ENCODE measurements at regions of chr19 and their contacts with region 1.

Region 1: GRCh38 chr19:29528350-29528945 is 2.7 kb downstream of the VSTM2B start:
- DNase-seq: peak; percentile 89
- ATAC-seq: peak; percentile 84
- H3K4me3 Mint-ChIP-seq: peak overlapping the region; percentile 52
- H3K27ac Mint-ChIP-seq: no peak overlapping the region
- H3K4me1 Mint-ChIP-seq: peaks cover 22% of the 10 kb centered on the region
- H3K27me3 Mint-ChIP-seq: peaks cover 63% of the 10 kb centered on the region

Region 2: DNA sequence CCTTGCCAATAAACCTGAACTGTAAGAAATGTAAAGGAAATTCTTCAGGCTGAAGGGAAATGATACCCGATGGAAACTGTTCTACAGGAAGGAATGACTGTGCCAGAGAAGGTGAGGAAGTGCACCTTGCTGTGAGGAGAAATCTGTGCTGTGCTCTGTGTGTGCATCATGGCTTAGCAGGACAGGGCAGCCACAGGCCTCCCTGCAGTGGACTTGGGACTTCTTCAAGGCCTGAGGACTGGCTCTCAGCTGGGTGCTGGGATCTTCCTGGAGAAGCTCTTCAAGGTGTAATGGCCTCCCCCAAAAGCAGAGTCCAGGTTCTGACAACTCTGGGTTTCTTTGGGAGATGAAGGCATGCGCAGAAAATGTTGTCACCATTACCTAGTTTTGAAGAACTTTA is 460.6 kb before region 1 on chr19:
- CTCF ChIA-PET with region 1: no interaction called
- POLR2A ChIA-PET with region 1: no interaction called
- intact Hi-C with region 1: no loop called
- DNase-seq: no peak
- ATAC-seq: no peak
- H3K4me3 Mint-ChIP-seq: no peak overlapping the region
- H3K27ac Mint-ChIP-seq: no peak overlapping the region
- H3K4me1 Mint-ChIP-seq: no peaks in the 10 kb centered on the region
- H3K27me3 Mint-ChIP-seq: peaks cover 8% of the 10 kb centered on the region

Region 3: DNA sequence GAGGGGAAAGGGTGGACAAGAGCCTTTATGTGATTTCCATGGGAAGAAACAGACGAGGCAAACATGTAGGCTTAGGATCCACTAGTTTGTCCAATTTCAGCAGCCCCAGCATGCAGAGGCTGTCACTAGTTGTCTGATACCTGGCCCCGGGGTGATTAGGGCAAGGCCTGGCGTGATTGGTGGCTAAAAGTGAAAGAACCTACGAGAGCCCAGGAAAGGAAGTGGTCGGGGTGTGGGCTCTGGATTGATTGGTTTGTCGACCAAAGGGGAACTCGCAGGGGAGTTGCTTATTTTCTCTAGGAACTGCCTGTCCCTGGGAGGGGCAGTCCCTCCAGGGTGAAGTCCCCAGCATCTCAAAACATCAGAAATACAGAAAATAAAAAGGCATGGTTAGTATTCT is 251.3 kb before region 1 on chr19:
- CTCF ChIA-PET with region 1: no interaction called
- POLR2A ChIA-PET with region 1: no interaction called
- intact Hi-C with region 1: loop called in 1 of 2 experiments (anchors 5 kb)
- DNase-seq: peak; percentile 76
- ATAC-seq: peak; percentile 100
- H3K4me3 Mint-ChIP-seq: no peak overlapping the region
- H3K27ac Mint-ChIP-seq: peak overlapping the region; percentile 33
- H3K4me1 Mint-ChIP-seq: peaks cover 10% of the 10 kb centered on the region
- H3K27me3 Mint-ChIP-seq: peaks cover 18% of the 10 kb centered on the region

Region 4: GRCh38 chr19:29467824-29468401 is 60.5 kb before region 1 on chr19:
- CTCF ChIA-PET with region 1: interaction called, 4 read pairs
- POLR2A ChIA-PET with region 1: no interaction called
- intact Hi-C with region 1: loop called in 1 of 2 experiments (anchors 10 kb)
- DNase-seq: peak; percentile 55
- ATAC-seq: no peak
- H3K4me3 Mint-ChIP-seq: no peak overlapping the region
- H3K27ac Mint-ChIP-seq: no peak overlapping the region
- H3K4me1 Mint-ChIP-seq: no peaks in the 10 kb centered on the region
- H3K27me3 Mint-ChIP-seq: peaks cover 22% of the 10 kb centered on the region

Region 5: DNA sequence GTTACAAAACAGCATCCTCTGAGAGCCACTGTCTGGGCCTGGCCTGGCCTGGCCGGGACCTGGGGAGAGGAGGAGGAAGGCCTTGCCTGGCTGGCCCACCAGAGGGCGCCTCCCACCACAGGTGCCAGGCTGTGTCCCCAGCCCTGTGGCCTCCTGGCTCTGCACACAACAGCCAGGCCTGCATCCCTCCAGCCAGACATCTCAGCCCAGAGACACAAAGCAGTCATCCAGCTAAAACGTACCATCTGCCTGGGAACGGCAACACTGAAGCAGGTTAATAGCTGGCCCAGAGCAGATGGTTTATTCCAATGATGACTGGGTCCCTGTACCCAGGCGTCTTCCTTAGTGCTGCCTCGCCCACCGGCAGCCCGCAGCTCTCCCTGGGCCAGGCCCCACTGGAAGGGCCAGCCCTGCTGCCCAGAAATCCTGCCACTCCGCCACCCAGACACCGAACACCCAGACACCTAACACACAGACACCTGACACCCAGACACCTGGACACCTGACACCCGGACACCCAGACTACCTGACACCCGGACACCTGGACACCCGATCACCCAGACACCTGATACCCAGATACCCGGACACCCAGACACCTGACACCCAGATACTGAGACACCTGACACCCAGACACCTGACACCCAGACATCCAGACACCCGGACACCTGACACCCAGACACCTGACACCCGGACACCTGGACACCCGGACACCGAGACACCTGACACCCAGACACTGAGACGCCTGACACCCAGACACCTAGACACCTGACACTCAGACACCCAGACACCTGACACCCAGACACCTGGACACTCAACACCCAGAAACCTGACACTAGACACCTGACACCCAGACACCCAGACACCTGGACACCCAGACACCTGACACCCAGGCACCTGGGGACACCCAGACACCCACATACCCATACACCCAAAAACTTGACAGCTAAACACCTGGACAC is 166.5 kb after region 1 on chr19:
- CTCF ChIA-PET with region 1: no interaction called
- POLR2A ChIA-PET with region 1: no interaction called
- intact Hi-C with region 1: loop called in 1 of 2 experiments (anchors 5 kb)
- DNase-seq: peak; percentile 92
- ATAC-seq: peak; percentile 97
- H3K4me3 Mint-ChIP-seq: no peak overlapping the region
- H3K27ac Mint-ChIP-seq: peak overlapping the region; percentile 53
- H3K4me1 Mint-ChIP-seq: peaks cover 12% of the 10 kb centered on the region
- H3K27me3 Mint-ChIP-seq: no peaks in the 10 kb centered on the region

Measured in activated CD4-positive, alpha-beta T cell treated with anti-CD3 and anti-CD28 coated beads for 36 hours (primary cell).